ENCODE measurements at regions of chr19 and their contacts with region 1.

Region 1: GRCh38 chr19:41305776-41306708 is 3.9 kb upstream of the CCDC97 start:
- DNase-seq: no peak
- ATAC-seq: no peak
- H3K4me3 ChIP-seq: no peak overlapping the region
- H3K27ac ChIP-seq: no peak overlapping the region
- H3K4me1 ChIP-seq: peaks cover 14% of the 10 kb centered on the region
- H3K27me3 ChIP-seq: no peaks in the 10 kb centered on the region
- CTCF ChIP-seq: no peak

Region 2: DNA sequence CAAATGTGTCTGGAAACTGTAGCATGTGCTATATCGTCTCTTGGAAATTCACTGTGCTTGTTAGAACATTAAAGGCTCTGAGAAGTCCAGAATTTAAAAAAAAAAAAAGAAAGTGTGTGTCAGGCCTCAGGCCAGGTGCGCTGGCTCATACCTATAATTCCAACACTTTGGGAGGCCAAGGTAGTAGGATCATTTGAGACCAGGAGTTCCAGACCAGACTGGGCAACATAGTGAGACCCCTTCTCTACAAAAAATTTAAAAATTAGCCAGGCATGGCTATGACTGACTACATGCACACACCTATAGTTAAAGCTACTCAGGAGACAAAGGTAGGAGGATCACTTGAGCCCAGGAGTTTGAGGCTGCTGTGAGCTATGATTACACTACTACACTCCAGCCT is 37.0 kb before region 1 on chr19:
- CTCF ChIA-PET with region 1: interaction called, 3 read pairs
- POLR2A ChIA-PET with region 1: interaction called, 12 read pairs
- in situ Hi-C with region 1: no loop called
- intact Hi-C with region 1: no loop called
- DNase-seq: no peak
- ATAC-seq: no peak
- H3K4me3 ChIP-seq: no peak overlapping the region
- H3K27ac ChIP-seq: no peak overlapping the region
- H3K4me1 ChIP-seq: peaks cover 12% of the 10 kb centered on the region
- H3K27me3 ChIP-seq: no peaks in the 10 kb centered on the region
- CTCF ChIP-seq: no peak

Region 3: DNA sequence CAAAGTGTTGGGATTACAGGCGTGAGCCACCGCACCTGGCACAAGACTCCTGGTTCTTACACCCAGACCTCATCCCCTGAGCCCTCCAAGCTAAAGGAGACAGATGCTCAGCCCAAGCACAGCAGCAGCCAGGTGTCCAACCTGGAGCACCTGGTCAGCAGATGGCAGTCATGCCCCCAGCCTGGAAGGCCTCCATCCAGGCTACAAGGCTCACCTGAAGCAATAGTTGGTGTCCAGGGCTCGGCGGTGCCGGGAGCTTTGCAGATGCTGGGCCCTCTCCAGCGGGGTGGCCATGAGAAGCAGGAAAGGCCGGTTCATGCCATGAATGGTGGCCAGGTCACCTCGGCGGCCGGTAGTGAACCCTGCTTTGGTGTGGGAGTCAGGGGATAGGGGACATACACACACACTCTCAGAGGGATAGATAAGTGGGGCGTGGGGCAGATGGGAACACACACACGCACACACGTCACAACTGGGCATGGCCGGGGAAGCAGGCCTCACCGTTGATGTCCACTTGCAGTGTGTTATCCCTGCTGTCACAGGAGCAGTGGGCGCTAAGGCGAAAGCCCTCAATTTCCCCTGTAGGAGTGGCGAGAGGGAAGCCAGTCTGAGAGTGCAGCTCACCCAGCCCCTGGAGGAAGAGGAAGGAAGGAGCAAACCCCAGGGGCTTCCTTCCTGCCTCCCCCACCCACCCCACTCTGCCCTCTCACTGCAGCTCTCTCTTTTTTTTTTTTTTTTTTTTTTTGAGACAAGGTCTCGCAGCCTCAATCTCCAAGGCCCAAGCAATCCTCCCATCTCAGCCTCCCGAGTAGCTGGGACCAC is 35.8 kb after region 1 on chr19:
- CTCF ChIA-PET with region 1: no interaction called
- POLR2A ChIA-PET with region 1: no interaction called
- in situ Hi-C with region 1: no loop called
- intact Hi-C with region 1: no loop called
- DNase-seq: no peak
- ATAC-seq: no peak
- H3K4me3 ChIP-seq: no peak overlapping the region
- H3K27ac ChIP-seq: no peak overlapping the region
- H3K4me1 ChIP-seq: no peaks in the 10 kb centered on the region
- H3K27me3 ChIP-seq: no peaks in the 10 kb centered on the region
- CTCF ChIP-seq: no peak

Measured in Panc1 (cell line).